Natural killer cell (primary cell): ENCODE measurements at regions of chr1 and their contacts with region 1.

Region 1: GRCh38 chr1:150532868-150533302 is 16.3 kb upstream of the ADAMTSL4 start:
- DNase-seq: no peak
- ATAC-seq: no peak
- H3K4me3 ChIP-seq: no peak overlapping the region
- H3K4me3 Mint-ChIP-seq: no peak overlapping the region
- H3K27ac ChIP-seq: no peak overlapping the region
- H3K27ac Mint-ChIP-seq: no peak overlapping the region
- H3K4me1 ChIP-seq: no peaks in the 10 kb centered on the region
- H3K4me1 Mint-ChIP-seq: no peaks in the 10 kb centered on the region
- H3K27me3 ChIP-seq: no peaks in the 10 kb centered on the region
- H3K27me3 Mint-ChIP-seq: no peaks in the 10 kb centered on the region
- CTCF ChIP-seq: peak; percentile 4

Region 2: GRCh38 chr1:150464422-150464826 is 68.5 kb before region 1 on chr1:
- intact Hi-C with region 1: loop called (anchors 1 kb)
- DNase-seq: peak; percentile 45 to 87
- ATAC-seq: peak; percentile 55 to 77 (median 74)
- H3K4me3 ChIP-seq: no peak overlapping the region
- H3K4me3 Mint-ChIP-seq: no peak overlapping the region
- H3K27ac ChIP-seq: no peak overlapping the region
- H3K27ac Mint-ChIP-seq: peak overlapping the region in 1 of 2 donors; percentile 20
- H3K4me1 ChIP-seq: no peaks in the 10 kb centered on the region
- H3K4me1 Mint-ChIP-seq: peaks cover 0 to 5% of the 10 kb centered on the region in 2 donors
- H3K27me3 ChIP-seq: no peaks in the 10 kb centered on the region
- H3K27me3 Mint-ChIP-seq: no peaks in the 10 kb centered on the region
- CTCF ChIP-seq: peak; percentile 87